ENCODE measurements at regions of chr10 and their contacts with region 1.

Region 1: DNA sequence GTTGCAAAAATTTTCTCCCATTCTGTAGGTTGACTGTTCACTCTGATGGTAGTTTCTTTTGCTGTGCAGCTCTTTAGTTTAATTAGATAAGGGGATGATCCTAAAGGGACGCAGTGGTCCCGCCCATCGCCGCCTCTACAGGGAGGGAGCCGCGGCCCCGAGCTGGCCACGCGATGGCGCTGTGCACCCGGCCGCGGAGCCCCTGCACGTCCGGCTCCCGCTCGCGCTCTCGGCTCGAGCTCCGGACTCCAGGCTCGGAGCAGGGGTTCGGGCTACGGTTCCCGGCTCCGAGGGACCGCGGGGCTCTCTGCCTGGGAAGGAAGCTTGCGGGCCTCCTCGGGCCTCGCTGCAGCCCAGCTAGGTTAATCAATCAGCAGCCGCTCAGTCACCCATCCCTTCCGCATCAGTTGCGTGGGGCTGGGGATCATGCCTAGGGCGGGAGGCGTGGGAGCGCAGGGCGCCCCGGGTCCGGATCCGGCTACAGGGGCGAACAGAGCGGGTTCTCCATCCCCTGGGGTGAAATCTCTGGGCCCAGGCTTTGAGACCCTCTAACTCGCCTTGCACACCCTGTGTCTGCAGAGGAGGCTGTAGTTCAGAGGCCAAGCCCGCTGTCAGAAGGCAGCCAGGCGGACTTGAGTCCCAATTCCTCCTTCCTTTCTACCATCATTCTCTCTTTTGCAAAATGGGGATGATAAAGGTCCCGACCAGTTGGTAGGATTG is 97.9 kb downstream of the WDR11 start:
- DNase-seq: peak; percentile 50
- H3K4me3 Mint-ChIP-seq: peak overlapping the region; percentile 21
- H3K27ac Mint-ChIP-seq: no peak overlapping the region
- H3K4me1 Mint-ChIP-seq: peaks cover 4% of the 10 kb centered on the region
- H3K27me3 Mint-ChIP-seq: peaks cover 29% of the 10 kb centered on the region

Region 2: DNA sequence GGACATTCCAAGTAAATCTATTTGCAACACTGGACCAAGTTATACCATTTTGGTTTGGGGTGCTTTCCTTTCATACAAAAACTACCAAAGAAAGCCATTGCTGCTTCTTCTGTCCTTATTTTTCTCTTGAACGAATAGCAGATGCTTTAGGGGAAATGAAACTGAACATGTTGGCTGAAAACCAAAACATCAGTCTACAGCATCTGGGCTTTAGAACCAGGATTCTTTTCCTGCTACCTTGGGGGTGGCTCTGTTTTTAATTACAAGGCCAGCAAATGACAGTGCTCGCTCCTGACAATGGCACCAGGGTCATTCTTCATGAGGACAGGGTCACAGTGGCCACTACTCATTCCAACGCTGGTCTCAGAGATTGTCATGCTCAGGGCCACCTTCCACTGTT is 17.6 kb before region 1 on chr10:
- intact Hi-C with region 1: no loop called
- DNase-seq: no peak
- H3K4me3 Mint-ChIP-seq: no peak overlapping the region
- H3K27ac Mint-ChIP-seq: no peak overlapping the region
- H3K4me1 Mint-ChIP-seq: no peaks in the 10 kb centered on the region
- H3K27me3 Mint-ChIP-seq: no peaks in the 10 kb centered on the region

Region 3: DNA sequence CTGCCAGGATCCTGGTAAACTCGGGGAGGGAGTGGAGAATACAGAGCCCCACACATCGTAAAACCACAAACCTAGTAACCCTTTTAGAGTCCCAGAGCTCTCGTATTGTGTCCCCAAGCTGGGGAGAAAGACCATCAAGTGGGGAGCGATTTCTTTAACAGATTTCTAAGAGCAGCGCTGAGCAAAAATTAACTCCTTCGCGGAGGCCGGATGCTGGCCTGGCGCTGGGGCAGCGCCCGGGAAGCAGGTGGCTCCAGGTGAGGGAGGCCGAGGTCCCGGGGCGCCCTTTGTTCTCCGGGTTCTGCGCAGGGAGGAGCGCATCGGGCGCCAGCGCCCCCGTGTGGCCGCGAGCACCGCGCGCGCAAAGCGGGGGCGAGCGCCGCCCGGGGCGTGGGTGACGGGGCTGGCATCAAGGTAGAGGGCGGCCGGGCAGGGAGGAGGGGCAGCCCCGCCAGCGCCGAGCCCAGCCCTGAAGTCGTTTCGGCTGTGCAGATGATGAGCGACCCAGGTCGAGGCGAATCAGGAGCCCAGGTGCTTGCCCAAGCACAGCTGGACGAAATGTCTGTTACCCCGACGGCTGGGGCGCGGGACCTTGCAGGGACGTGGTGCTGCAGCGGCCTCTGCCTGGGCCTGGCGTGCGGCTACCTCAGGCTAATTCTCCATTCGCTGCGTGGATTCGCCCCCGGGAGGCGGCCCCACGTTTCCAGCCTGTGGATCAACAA is 659.6 kb after region 1 on chr10:
- intact Hi-C with region 1: loop called (anchors 2 kb)
- DNase-seq: peak; percentile 30
- H3K4me3 Mint-ChIP-seq: no peak overlapping the region
- H3K27ac Mint-ChIP-seq: no peak overlapping the region
- H3K4me1 Mint-ChIP-seq: no peaks in the 10 kb centered on the region
- H3K27me3 Mint-ChIP-seq: peaks cover 15% of the 10 kb centered on the region